Left ventricle myocardium superior (tissue), 1 donor: ENCODE measurements at regions of chr2 and their contacts with region 1.

Region 1: GRCh38 chr2:158006961-158007719 is 94.5 kb upstream of the UPP2 start:
- DNase-seq: no peak
- ATAC-seq: peak; percentile 61

Region 2: DNA sequence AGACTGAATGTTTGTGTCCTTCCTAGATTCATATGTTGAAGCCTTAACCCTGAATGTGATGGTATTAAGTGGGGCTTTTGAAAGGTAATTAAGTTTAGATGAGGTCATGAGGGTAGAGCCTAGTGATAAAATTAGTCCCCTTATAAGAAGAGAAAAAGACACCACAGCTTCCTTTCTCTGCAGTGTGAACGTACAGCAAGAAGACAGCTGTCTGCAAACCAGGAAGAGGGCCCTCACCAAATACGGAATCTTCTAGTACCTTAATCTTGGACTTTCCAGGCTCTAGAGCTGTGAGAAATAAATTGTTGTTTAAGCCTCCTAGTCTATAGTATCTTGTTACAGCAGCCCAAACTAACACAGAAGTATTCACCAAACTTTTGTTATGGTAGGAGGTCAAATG is 506.1 kb before region 1 on chr2:
- intact Hi-C with region 1: loop called (anchors 5 kb)
- DNase-seq: no peak
- ATAC-seq: no peak

Region 3: DNA sequence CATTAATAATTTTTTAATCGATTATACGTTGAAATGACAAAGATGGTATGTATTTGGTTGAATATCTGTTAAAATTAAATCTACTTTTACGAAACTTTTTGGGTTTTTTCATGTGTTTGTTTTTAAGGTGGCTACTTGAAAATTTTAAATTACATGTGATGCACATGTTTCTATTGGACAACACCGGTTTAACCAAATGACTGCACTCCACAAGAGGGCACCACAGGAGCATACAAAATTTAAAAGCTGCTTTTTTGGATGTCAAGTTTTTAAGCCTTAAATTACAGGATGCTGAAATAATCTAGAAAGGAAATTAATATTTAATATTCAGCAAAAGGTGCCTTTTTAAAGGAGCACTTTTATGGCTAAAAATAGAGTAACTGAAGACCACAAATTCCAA is 229.7 kb before region 1 on chr2:
- intact Hi-C with region 1: loop called (anchors 2 kb)
- DNase-seq: no peak
- ATAC-seq: no peak

Region 4: DNA sequence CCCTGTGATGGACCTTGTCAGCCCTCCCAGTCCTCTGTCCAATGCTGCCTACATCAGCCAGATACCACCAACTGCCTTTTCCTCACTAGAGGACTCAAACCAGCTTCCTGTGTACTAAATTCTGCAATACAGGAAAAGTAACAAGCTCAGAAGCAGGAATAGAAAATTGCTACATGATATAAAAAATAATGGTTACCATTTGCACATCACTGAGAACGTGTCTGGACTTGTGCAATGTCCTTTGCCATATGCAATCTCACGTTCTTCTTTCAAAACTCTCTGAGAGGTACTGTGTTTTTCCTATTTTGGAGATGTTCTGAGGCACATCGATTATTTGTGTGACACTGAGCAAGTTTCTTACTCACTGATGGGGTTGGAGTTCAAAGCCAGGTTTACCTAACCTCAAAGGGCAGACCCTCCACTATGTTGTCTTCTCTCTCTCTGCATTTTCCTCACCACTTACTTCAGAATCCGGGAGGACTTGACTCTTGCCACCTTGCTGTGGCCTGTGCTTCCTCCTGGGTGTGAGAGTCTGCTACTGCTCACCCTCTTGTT is 106.7 kb after region 1 on chr2:
- intact Hi-C with region 1: no loop called
- DNase-seq: no peak
- ATAC-seq: no peak

Region 5: DNA sequence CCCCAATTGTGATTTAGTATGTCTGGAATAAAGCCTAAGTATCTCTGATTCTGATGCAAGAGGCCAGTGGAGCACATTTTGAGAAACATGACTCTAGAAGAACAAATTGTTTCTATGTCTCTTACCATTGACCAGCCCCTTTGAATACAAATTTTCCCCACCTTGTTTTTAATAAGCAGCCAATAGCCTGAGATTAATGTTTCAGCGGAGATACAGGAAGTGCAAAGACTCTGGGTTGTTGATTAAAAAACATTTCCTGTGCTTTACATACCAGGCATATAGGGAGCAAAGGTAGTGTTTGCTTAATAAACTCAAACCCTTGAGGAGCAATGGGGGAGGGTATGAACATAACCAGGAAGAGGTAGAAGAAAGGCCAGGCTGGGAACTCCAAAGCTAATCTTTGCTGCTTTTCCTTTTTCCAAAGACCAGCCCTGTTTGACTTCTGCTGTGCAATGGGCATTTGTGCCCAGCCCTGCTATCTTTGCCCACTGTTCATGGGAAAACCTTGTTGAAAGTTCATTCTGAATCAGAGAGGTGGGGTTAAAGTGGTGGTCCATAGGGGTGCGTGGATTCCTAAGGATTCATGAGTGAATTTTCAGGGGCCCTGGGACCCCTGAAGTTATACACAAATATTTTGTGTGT is 123.8 kb after region 1 on chr2:
- intact Hi-C with region 1: no loop called
- DNase-seq: no peak
- ATAC-seq: no peak